ENCODE measurements at regions of chr3 and their contacts with region 1.

Region 1: DNA sequence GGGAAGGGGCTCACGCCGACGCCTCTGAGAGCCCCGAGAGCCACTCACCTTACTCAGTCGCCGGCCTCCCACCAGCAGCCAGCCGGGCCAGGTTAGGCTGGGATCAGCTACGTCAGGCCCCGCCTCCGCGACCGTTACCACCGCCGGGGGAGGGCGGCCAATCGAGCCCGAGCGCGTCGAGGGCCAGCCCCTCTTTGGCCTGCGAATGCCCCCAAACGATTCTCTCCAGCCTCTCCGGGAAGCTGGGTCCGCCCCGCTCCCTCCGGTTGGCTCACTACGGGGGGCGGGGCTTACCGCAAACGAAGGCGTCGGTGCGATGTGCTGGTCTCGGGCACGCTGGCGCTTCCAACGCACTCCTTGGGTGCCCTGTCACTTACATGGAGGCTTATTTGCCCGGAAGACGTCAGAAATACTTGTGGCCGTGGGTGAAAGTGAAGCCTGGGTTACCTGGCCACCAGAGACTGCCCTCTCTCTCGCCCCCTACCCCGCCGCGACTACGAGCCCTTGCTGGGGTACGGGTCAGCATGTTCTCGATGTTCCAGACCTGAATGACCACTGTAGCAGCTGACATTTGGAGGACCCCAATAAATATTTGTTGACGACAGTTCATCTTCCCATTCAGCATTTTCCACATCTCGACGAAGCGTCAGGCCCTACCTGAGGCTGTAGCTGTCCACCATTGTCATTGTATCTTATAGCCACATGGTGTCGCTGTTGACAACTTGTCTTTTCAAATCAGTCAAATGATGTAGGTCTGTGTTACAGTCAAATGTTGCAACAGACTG is at the start of gene CEP70:
- DNase-seq: peak; percentile 94
- ATAC-seq: peak; percentile 97
- H3K4me3 ChIP-seq: peak within 1 kb of the TSS; percentile 75 to 88 (median 83)
- H3K27ac ChIP-seq: peak within 1 kb of the TSS; percentile 71
- H3K4me1 ChIP-seq: peaks cover 34% of the 10 kb centered on the region
- H3K27me3 ChIP-seq: no peaks in the 10 kb centered on the region; a peak in 1 of 5 replicates
- CTCF ChIP-seq: peak; percentile 96
- EP300 ChIP-seq: 0 out of 4 replicates have a peak, but pooled peaks of 1 of the 2 experiments have one; percentile 58
- POLR2A ChIP-seq: peak; percentile 76 to 88
- RAD21 ChIP-seq: peak; percentile 64
- total RNA-seq, gene CEP70: 22.3 and 24.4 TPM in 2 replicates

Region 2: DNA sequence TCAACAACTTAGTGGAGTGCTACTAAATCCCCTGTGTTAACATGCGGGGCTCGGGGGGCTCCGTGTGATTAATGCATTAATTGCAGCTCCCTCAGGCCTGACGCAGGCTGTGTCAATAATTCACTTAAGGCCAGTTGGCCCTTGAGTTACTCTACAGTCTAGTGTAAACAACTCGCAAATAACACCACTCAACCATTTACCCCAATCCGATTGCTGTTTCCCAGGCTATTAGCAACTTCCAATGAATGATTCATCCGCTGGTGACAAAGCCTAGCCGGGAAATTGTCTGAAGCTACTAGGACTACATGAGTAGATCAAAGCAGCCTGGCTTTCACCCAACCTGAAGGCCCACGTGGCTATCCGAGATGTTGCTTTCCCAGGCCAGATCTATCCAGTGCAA is 951.5 kb before region 1 on chr3:
- CTCF ChIA-PET with region 1: no interaction called
- POLR2A ChIA-PET with region 1: no interaction called
- in situ Hi-C with region 1: no loop called
- intact Hi-C with region 1: no loop called
- DNase-seq: no peak
- ATAC-seq: no peak
- H3K4me3 ChIP-seq: no peak overlapping the region
- H3K27ac ChIP-seq: no peak overlapping the region
- H3K4me1 ChIP-seq: no peaks in the 10 kb centered on the region
- H3K27me3 ChIP-seq: no peaks in the 10 kb centered on the region; a peak in 1 of 5 replicates
- CTCF ChIP-seq: no peak
- EP300 ChIP-seq: no peak
- POLR2A ChIP-seq: no peak
- RAD21 ChIP-seq: no peak

Region 3: DNA sequence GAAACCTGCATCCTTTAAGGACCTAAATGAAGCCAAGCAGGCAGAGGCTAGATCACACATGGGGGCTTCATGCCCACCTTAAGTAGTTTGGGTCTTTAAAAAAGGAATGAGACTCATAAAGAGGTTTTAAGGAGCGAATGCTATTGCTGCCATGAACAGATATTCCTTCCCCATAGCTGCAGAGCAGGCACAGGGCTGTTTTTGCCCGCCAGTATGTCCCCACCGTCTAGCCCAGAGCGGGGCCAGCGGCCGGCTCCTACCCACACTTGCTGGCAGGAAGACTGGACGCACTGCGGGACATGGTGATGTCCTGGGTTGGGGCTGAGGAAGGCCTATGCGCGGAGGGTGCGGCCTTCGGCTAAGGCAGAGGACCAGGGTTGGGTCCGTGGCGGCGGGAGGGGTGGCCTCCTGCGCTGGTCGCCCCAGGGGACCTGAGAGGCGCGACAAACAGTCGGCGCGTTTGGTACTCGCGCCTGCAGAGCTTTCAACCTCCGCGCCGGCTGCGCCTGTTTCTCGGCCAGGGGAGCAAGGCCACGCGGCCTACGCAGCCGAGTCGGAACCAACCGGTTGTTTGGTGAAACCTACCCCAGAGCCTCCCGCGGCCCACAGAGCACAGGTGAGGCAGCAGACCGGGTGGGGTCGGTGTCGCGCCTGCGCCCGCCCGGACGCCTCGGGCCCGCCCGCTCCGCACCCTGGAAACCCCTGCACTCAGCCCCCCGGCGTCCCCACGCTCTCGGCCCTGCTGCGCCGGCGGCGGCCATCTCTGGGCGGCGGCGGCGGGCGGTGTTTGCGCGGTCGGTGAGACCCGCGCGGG is 14.2 kb after region 1 on chr3 and contains the start of gene FAIM:
- CTCF ChIA-PET with region 1: no interaction called
- POLR2A ChIA-PET with region 1: interaction called, 36 read pairs
- in situ Hi-C with region 1: no loop called
- intact Hi-C with region 1: no loop called
- DNase-seq: peak; percentile 50
- ATAC-seq: peak; percentile 89
- H3K4me3 ChIP-seq: peak within 1 kb of the TSS; percentile 78 to 80 (median 80)
- H3K27ac ChIP-seq: peak within 1 kb of the TSS; percentile 91
- H3K4me1 ChIP-seq: peaks cover 27% of the 10 kb centered on the region
- H3K27me3 ChIP-seq: no peaks in the 10 kb centered on the region
- CTCF ChIP-seq: peak; percentile 16; the same call in 1 of the 2 replicates
- EP300 ChIP-seq: 0 out of 4 replicates have a peak, but pooled peaks of 1 of the 2 experiments have one; percentile 17
- POLR2A ChIP-seq: peak; percentile 68 to 84
- RAD21 ChIP-seq: peak; percentile 38; the same call in 1 of the 2 replicates
- total RNA-seq, gene FAIM: 25.8 and 33.9 TPM in 2 replicates

Region 4: GRCh38 chr3:138834359-138835212 is 240.2 kb after region 1 on chr3 and contains the start of gene PIK3CB:
- CTCF ChIA-PET with region 1: no interaction called
- POLR2A ChIA-PET with region 1: interaction called, 3 read pairs
- in situ Hi-C with region 1: no loop called
- intact Hi-C with region 1: loop called (anchors 1 kb)
- DNase-seq: peak; percentile 72
- ATAC-seq: peak; percentile 95
- H3K4me3 ChIP-seq: peak within 1 kb of the TSS; percentile 80 to 94 (median 86)
- H3K27ac ChIP-seq: peak within 1 kb of the TSS; percentile 95
- H3K4me1 ChIP-seq: peaks cover 39% of the 10 kb centered on the region
- H3K27me3 ChIP-seq: no peaks in the 10 kb centered on the region; a peak in 1 of 5 replicates
- CTCF ChIP-seq: peak; percentile 72
- EP300 ChIP-seq: no peak
- POLR2A ChIP-seq: peak; percentile 91 to 92
- RAD21 ChIP-seq: peak; percentile 84
- total RNA-seq, gene PIK3CB: 6.6 and 18.6 TPM in 2 replicates

Region 5: DNA sequence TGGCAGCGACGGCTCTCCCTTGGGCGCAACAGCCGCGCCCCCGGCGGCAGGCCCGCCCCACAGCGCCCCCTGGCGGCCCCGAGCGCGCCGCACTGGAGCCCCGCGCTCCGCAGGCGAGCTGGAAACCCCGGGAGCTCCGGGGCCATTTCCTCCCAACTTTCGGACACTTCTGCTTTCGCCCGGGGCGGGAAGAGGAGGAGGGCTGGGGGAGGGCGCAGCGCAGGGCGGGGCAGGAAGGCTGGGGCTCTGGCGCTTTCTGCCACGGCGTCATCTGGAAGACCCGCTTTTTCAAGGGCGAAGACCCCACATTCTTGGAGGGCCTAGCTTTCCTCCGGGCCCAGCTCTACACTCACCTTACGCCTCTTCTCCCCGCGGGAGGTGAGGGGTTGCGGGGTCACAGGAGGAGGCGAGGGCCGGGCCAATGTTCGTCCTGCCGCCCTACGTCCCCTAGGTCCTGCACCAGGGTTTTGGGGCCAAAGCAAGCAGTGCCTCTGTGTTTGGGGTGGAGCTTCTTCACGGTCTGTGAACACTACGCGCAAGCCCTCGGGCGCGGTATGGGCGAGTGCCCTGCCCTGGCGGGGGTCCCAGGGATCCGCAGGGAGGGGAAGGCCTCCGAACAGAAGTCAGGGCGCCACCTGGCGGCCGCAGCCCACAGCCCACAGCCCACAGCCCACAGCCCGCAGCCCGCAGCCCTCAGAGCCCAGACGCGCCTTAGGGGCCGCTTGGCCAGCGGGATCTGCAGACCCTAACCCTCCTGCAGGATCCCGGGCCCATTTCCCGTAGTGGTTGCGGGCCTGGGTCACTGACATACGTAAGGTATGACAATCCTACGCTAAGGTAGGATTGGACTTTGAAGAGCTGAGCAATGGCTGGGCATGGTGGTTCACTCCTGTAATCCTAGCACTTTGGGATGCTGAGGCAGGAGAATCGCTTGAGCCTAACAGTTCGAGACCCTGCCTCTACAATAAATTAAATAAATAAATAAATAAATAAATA is 321.5 kb after region 1 on chr3:
- CTCF ChIA-PET with region 1: interaction called, 21 read pairs
- POLR2A ChIA-PET with region 1: interaction called, 36 read pairs
- in situ Hi-C with region 1: loop called (anchors 5 kb)
- intact Hi-C with region 1: loop called (anchors 1 kb)
- DNase-seq: peak; percentile 76
- ATAC-seq: peak; percentile 94
- H3K4me3 ChIP-seq: peak overlapping the region; percentile 82 to 89 (median 83)
- H3K27ac ChIP-seq: peak overlapping the region; percentile 83
- H3K4me1 ChIP-seq: peaks cover 15% of the 10 kb centered on the region
- H3K27me3 ChIP-seq: no peaks in the 10 kb centered on the region; a peak in 2 of 5 replicates
- CTCF ChIP-seq: peak; percentile 98
- EP300 ChIP-seq: no peak
- POLR2A ChIP-seq: peak in 1 of 2 experiments; percentile 41; a peak in 1 of 4 replicates
- RAD21 ChIP-seq: peak; percentile 95

Region 6: GRCh38 chr3:138935848-138936740 is 341.8 kb after region 1 on chr3:
- CTCF ChIA-PET with region 1: no interaction called
- POLR2A ChIA-PET with region 1: interaction called, 10 read pairs
- in situ Hi-C with region 1: no loop called
- intact Hi-C with region 1: no loop called
- DNase-seq: peak; percentile 27
- ATAC-seq: peak; percentile 84
- H3K4me3 ChIP-seq: peak overlapping the region; percentile 22 to 71 (median 43)
- H3K27ac ChIP-seq: no peak overlapping the region
- H3K4me1 ChIP-seq: peaks cover 37% of the 10 kb centered on the region
- H3K27me3 ChIP-seq: peaks cover 20 to 64% of the 10 kb centered on the region in 2 experiments; a peak in 4 of 5 replicates
- CTCF ChIP-seq: peak; percentile 95
- EP300 ChIP-seq: no peak
- POLR2A ChIP-seq: no peak
- RAD21 ChIP-seq: peak; percentile 74

Region 7: GRCh38 chr3:140528940-140529495 is 1934.7 kb after region 1 on chr3:
- CTCF ChIA-PET with region 1: no interaction called
- POLR2A ChIA-PET with region 1: no interaction called
- in situ Hi-C with region 1: no loop called
- intact Hi-C with region 1: no loop called
- DNase-seq: no peak
- ATAC-seq: no peak
- H3K4me3 ChIP-seq: no peak overlapping the region
- H3K27ac ChIP-seq: no peak overlapping the region
- H3K4me1 ChIP-seq: no peaks in the 10 kb centered on the region
- H3K27me3 ChIP-seq: no peaks in the 10 kb centered on the region
- CTCF ChIP-seq: no peak
- EP300 ChIP-seq: no peak
- POLR2A ChIP-seq: no peak
- RAD21 ChIP-seq: no peak

Measured in HepG2 (cell line).